ENCODE measurements at regions of chr14 and their contacts with region 1.

Region 1: DNA sequence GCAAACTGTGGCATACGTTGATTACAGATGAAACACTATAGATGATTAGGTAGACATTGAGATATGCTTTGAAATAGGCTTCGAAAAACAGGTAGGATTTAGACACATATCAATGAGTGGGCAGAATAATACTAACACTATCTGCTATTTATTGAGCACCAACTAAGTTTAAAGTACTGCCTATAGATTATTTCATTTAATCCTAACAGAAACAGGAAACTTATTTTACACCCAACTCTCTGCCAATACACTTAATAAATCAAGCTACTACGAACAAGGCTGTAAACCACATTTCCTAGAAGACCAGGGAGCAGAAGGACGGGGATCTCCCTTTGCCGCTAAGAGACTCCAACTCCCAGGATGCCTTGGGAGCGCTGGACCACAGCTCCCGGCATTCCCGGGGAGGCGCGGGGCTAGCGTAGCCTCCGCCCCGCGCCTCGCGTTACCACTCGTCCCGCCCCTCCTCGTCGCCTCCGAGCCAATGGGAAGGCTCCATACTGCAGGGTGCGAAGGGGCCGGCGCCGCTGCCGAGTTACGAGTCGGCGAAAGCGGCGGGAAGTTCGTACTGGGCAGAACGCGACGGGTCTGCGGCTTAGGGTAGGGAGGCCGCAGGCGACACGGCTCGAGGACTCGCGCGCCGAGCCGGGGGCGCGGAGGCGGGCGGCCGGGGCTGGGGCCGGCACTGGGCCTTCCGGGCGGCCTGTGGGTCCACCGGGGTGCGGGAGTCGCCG is at the start of gene VRK1:
- DNase-seq: peak; percentile 90 to 93 (median 91)
- H3K4me3 ChIP-seq: peak within 1 kb of the TSS; percentile 54 to 71
- H3K4me3 Mint-ChIP-seq: peak within 1 kb of the TSS; percentile 84 to 96 (median 90)
- H3K27ac ChIP-seq: peak within 1 kb of the TSS; percentile 65
- H3K27ac Mint-ChIP-seq: peak within 1 kb of the TSS; percentile 90 to 94 (median 92)
- H3K4me1 ChIP-seq: peaks cover 18% of the 10 kb centered on the region
- H3K4me1 Mint-ChIP-seq: peaks cover 12 to 29% (median 19%) of the 10 kb centered on the region in 4 donors
- H3K27me3 ChIP-seq: no peaks in the 10 kb centered on the region
- H3K27me3 Mint-ChIP-seq: peaks cover 0 to 9% of the 10 kb centered on the region in 2 donors
- total RNA-seq, gene VRK1: 40.2 to 41.0 TPM

Region 2: GRCh38 chr14:96501742-96502617 is 295.0 kb before region 1 on chr14 and contains the start of gene PAPOLA:
- CTCF ChIA-PET with region 1: no interaction called
- POLR2A ChIA-PET with region 1: no interaction called
- intact Hi-C with region 1: loop called (anchors 1 kb)
- DNase-seq: peak; percentile 94 to 96 (median 95)
- H3K4me3 ChIP-seq: peak within 1 kb of the TSS; percentile 83 to 88
- H3K4me3 Mint-ChIP-seq: peak within 1 kb of the TSS; percentile 94 to 99 (median 98)
- H3K27ac ChIP-seq: peak within 1 kb of the TSS; percentile 94
- H3K27ac Mint-ChIP-seq: peak within 1 kb of the TSS; percentile 95 to 100 (median 98)
- H3K4me1 ChIP-seq: peaks cover 45% of the 10 kb centered on the region
- H3K4me1 Mint-ChIP-seq: peaks cover 28 to 57% (median 43%) of the 10 kb centered on the region in 4 donors
- H3K27me3 ChIP-seq: no peaks in the 10 kb centered on the region
- H3K27me3 Mint-ChIP-seq: peaks cover 5 to 6% of the 10 kb centered on the region in 2 donors
- total RNA-seq, gene PAPOLA: 236 to 244 TPM

Region 3: GRCh38 chr14:96514694-96515093 is 282.3 kb before region 1 on chr14:
- CTCF ChIA-PET with region 1: no interaction called
- POLR2A ChIA-PET with region 1: no interaction called
- intact Hi-C with region 1: no loop called
- DNase-seq: no peak
- H3K4me3 ChIP-seq: no peak overlapping the region
- H3K4me3 Mint-ChIP-seq: peak overlapping the region in 4 of 8 donors; percentile 4 to 63 (median 12)
- H3K27ac ChIP-seq: no peak overlapping the region
- H3K27ac Mint-ChIP-seq: peak overlapping the region in 4 of 7 donors; percentile 3 to 76 (median 29)
- H3K4me1 ChIP-seq: peaks cover 80% of the 10 kb centered on the region
- H3K4me1 Mint-ChIP-seq: peaks cover 51 to 85% (median 65%) of the 10 kb centered on the region in 4 donors
- H3K27me3 ChIP-seq: no peaks in the 10 kb centered on the region
- H3K27me3 Mint-ChIP-seq: no peaks in the 10 kb centered on the region

Region 4: DNA sequence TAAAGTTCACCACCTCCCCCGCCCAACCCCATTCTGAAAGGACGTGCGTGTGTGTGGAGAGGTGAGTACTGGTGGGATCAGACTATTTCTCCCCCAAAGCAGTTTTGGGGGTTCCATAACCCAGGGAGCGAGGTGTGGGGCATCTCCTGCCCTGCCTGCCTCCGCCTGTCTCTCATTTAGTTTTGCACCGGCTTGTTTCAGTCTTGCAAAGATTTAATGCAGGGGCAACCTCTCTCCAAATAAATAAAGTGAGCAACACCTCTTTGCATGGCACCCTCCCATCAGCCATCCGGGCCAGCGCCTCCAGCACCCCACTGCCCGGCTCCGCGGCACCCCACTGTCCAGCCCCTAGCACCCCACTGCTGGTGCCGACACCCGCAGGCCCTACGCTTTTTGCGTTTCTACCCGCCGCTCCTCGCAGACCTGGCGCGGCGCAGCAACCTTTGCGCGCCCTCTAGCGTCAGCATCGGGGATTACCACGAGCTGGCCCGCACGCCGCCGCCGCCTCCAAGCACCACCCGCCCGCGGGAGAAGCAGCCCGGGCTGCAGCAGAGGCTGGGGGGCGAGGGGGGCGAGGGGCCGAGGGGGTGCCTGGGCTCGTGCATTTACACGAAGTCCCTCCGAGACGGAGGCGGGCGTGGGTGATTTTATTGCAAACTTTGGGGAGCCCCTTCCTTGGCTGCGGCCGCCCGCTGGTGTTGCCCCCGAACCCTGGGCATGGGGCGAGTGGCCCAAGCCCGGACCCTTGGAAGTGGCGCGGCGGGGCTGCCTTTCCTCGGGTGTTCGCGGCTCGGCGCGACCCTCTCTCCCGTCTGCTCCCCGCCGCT is 55.7 kb before region 1 on chr14:
- CTCF ChIA-PET with region 1: no interaction called
- POLR2A ChIA-PET with region 1: no interaction called
- intact Hi-C with region 1: no loop called
- DNase-seq: peak; percentile 61 to 78 (median 70)
- H3K4me3 ChIP-seq: peak overlapping the region in 1 of 2 donors; percentile 36
- H3K4me3 Mint-ChIP-seq: peak overlapping the region; percentile 68 to 87 (median 77)
- H3K27ac ChIP-seq: no peak overlapping the region
- H3K27ac Mint-ChIP-seq: no peak overlapping the region
- H3K4me1 ChIP-seq: peaks cover 13% of the 10 kb centered on the region
- H3K4me1 Mint-ChIP-seq: peaks cover 0 to 8% (median 5%) of the 10 kb centered on the region in 4 donors
- H3K27me3 ChIP-seq: peaks cover 20% of the 10 kb centered on the region
- H3K27me3 Mint-ChIP-seq: peaks cover 53 to 71% of the 10 kb centered on the region in 2 donors

Region 5: DNA sequence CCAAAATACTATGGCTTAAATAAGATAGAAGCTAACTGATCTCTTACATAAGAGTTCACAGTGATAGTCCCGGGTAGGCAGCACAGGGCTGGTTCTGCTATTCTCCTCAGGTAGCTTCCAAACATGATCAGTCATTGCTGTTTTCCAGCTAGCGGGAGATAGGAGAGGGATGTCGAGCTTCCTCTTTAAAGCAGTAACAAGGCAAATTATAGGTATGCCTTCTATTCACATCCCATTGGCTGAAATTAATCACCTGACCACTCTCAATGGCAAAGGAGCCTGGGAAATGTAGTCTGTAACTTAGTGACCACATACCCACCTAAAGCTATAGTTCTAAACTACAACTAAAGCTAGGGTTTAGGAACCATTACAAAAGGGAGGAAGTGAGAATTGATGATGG is 34.4 kb before region 1 on chr14:
- CTCF ChIA-PET with region 1: no interaction called
- POLR2A ChIA-PET with region 1: interaction called, 4 read pairs
- intact Hi-C with region 1: loop called (anchors 1 kb)
- DNase-seq: peak; percentile 46 to 67 (median 63)
- H3K4me3 ChIP-seq: no peak overlapping the region
- H3K4me3 Mint-ChIP-seq: peak overlapping the region; percentile 39 to 79 (median 61)
- H3K27ac ChIP-seq: no peak overlapping the region
- H3K27ac Mint-ChIP-seq: no peak overlapping the region
- H3K4me1 ChIP-seq: no peaks in the 10 kb centered on the region
- H3K4me1 Mint-ChIP-seq: peaks cover 0 to 6% (median 5%) of the 10 kb centered on the region in 4 donors
- H3K27me3 ChIP-seq: no peaks in the 10 kb centered on the region
- H3K27me3 Mint-ChIP-seq: peaks cover 3 to 5% of the 10 kb centered on the region in 2 donors

Region 6: GRCh38 chr14:96962337-96962736 is 165.3 kb after region 1 on chr14:
- CTCF ChIA-PET with region 1: no interaction called
- POLR2A ChIA-PET with region 1: interaction called, 8 read pairs
- intact Hi-C with region 1: loop called (anchors 1 kb)
- DNase-seq: peak in 4 of 5 donors; percentile 50 to 68 (median 56)
- H3K4me3 ChIP-seq: peak overlapping the region in 1 of 2 donors; percentile 33
- H3K4me3 Mint-ChIP-seq: peak overlapping the region in 7 of 8 donors; percentile 55 to 87 (median 76)
- H3K27ac ChIP-seq: peak overlapping the region; percentile 30
- H3K27ac Mint-ChIP-seq: peak overlapping the region; percentile 89 to 98 (median 95)
- H3K4me1 ChIP-seq: peaks cover 73% of the 10 kb centered on the region
- H3K4me1 Mint-ChIP-seq: peaks cover 34 to 75% (median 51%) of the 10 kb centered on the region in 4 donors
- H3K27me3 ChIP-seq: no peaks in the 10 kb centered on the region
- H3K27me3 Mint-ChIP-seq: no peaks in the 10 kb centered on the region

Region 7: GRCh38 chr14:97120611-97121031 is 323.6 kb after region 1 on chr14:
- CTCF ChIA-PET with region 1: no interaction called
- POLR2A ChIA-PET with region 1: interaction called, 3 read pairs
- intact Hi-C with region 1: loop called (anchors 10 kb)
- DNase-seq: peak; percentile 34 to 78 (median 45)
- H3K4me3 ChIP-seq: peak overlapping the region in 1 of 2 donors; percentile 19
- H3K4me3 Mint-ChIP-seq: peak overlapping the region in 7 of 8 donors; percentile 56 to 88 (median 70)
- H3K27ac ChIP-seq: peak overlapping the region; percentile 38
- H3K27ac Mint-ChIP-seq: peak overlapping the region; percentile 81 to 95 (median 94)
- H3K4me1 ChIP-seq: peaks cover 34% of the 10 kb centered on the region
- H3K4me1 Mint-ChIP-seq: peaks cover 19 to 37% (median 31%) of the 10 kb centered on the region in 4 donors
- H3K27me3 ChIP-seq: no peaks in the 10 kb centered on the region
- H3K27me3 Mint-ChIP-seq: no peaks in the 10 kb centered on the region

Measured in CD4-positive, alpha-beta memory T cell (primary cell).